Activated naive CD4-positive, alpha-beta T cell treated with anti-CD3 and anti-CD28 coated beads for 36 hours (primary cell): ENCODE measurements at regions of chr1 and their contacts with region 1.

Region 1: DNA sequence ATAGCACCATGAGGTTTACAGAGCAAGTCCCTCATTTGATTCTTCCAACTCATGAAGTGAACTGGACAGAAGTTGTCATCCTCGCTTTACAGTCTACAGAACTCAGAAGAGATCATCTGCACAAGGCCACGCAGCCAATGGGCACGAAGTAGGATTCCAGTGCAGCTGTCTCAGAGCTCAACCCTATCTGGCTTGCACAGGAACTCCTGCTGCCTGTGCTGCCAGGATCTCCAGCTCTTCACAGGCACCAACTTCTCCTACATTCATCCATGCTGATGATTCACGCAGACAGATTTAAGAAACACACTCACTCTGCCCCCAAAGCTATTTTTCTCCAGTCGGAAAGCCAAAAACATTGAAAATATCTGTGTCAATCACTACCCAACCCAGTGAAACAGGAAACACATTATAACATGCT is 157.0 kb downstream of the RERE start:
- DNase-seq: no peak
- H3K4me3 Mint-ChIP-seq: no peak overlapping the region
- H3K27ac Mint-ChIP-seq: no peak overlapping the region
- H3K4me1 Mint-ChIP-seq: peaks cover 9% of the 10 kb centered on the region
- H3K27me3 Mint-ChIP-seq: no peaks in the 10 kb centered on the region

Region 2: DNA sequence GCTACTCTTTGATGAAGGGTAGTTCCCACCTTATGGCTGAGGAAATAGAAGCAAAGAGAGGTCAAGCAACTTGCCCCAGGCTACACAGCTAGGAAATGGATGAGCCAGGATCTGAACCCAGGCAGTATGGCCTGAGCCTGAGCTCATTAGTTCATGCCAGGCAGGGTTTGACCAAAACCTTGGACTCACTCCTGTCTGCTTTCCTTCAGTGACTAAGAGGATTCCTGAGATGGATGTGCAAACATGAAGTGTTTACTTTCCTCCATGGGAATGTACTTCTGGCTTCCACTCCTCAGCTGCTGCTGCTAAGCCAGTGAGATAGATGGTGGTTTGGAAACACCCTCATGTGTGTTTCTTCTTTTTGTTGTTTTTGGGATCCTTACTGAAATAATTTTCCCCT is 599.2 kb before region 1 on chr1:
- CTCF ChIA-PET with region 1: no interaction called
- intact Hi-C with region 1: no loop called
- DNase-seq: no peak
- H3K4me3 Mint-ChIP-seq: no peak overlapping the region
- H3K27ac Mint-ChIP-seq: no peak overlapping the region
- H3K4me1 Mint-ChIP-seq: no peaks in the 10 kb centered on the region
- H3K27me3 Mint-ChIP-seq: no peaks in the 10 kb centered on the region

Region 3: DNA sequence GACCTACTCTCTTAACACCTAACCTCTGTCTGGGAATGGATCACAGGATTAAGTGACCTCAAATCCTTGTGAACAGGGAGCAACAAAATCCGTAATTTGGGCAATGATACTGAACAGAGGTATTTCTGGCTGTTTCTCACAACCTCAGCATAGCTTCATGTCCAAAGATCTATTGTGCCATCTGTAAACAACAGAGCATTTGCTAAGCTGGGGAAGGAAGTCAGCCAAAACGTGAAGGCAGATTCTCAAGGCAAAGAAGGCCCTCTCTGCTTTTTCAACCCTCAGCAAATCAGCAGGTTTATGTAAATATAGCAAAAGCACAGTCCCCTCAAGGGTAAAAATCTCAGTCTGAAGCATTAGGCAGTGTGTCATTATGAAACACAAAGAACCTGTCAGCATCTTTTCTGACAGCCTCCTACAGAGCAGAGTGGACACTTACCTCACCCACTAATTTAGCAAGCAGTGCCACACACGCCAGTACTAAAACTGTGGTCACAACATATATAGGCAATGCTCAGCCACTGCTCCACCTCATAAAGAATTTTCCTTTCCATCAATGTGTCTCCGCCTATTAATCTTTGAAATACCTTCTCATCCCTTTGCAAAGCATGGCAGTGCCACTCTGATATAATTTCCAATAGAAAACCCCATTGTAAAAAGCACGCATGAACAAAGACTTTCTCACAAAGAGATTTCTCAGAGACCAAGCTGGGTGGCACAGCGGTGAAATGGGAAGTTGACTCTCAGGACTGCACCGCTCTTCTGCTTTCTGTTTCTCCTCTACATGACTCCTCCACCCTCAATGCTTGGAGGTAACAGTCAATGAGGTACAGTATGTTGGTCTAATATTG is 31.0 kb before region 1 on chr1:
- CTCF ChIA-PET with region 1: no interaction called
- intact Hi-C with region 1: loop called (anchors 5 kb)
- DNase-seq: peak; percentile 37
- H3K4me3 Mint-ChIP-seq: no peak overlapping the region
- H3K27ac Mint-ChIP-seq: no peak overlapping the region
- H3K4me1 Mint-ChIP-seq: peaks cover 58% of the 10 kb centered on the region
- H3K27me3 Mint-ChIP-seq: no peaks in the 10 kb centered on the region

Region 4: GRCh38 chr1:8649027-8649426 is 11.4 kb before region 1 on chr1:
- CTCF ChIA-PET with region 1: no interaction called
- intact Hi-C with region 1: loop called (anchors 1 kb)
- DNase-seq: peak; percentile 13
- H3K4me3 Mint-ChIP-seq: no peak overlapping the region
- H3K27ac Mint-ChIP-seq: no peak overlapping the region
- H3K4me1 Mint-ChIP-seq: peaks cover 49% of the 10 kb centered on the region
- H3K27me3 Mint-ChIP-seq: no peaks in the 10 kb centered on the region

Region 5: DNA sequence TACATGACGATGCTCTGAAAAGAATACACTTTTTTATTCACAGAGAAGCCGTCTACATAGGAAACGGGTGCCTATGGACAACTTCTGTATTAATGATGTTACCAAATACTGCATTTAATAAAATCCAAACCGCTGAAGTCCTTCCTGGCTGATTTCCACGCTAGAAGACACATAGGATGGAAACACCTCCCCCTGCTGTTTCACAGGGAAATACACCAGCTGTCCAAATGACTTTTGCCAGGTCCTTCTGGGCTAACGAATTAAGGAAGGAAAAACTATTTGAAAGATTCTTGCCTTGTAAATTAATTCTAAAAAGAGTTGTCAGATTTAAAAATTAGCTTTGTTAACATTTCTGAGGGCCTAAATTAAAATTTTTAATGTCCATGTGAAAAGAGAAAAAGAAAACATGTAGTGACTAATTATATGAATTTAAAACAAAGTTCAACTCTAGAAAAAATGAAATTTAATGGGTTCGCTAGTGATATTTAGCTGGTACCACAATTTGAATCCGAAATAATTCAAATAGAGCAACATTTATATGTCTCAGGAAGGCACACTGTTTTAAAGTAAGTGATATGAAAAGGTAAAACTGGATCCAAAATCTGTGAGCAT is 11.0 kb after region 1 on chr1:
- CTCF ChIA-PET with region 1: interaction called, 4 read pairs
- intact Hi-C with region 1: loop called (anchors 1 kb)
- DNase-seq: peak; percentile 43
- H3K4me3 Mint-ChIP-seq: no peak overlapping the region
- H3K27ac Mint-ChIP-seq: no peak overlapping the region
- H3K4me1 Mint-ChIP-seq: peaks cover 52% of the 10 kb centered on the region
- H3K27me3 Mint-ChIP-seq: no peaks in the 10 kb centered on the region

Region 6: DNA sequence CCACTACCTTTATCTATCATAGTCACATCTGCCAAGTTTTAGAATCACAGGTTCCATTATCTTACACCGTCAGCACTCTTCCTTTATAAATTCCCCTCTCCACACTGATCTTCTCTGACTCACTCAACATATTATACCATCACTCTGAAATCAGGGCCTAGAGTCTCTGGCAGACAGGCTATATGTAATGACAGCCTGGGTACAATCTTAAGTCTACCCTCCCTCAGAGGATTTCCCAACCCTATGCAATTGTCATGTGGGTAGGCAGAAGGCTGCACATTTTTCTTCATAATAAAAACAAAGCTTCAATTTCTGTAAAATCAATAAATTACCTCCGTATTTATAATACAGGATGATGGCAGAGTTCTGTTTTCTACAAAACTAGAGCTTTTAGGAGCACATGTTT is 19.0 kb after region 1 on chr1:
- CTCF ChIA-PET with region 1: no interaction called
- intact Hi-C with region 1: loop called (anchors 1 kb)
- DNase-seq: no peak
- H3K4me3 Mint-ChIP-seq: no peak overlapping the region
- H3K27ac Mint-ChIP-seq: no peak overlapping the region
- H3K4me1 Mint-ChIP-seq: peaks cover 28% of the 10 kb centered on the region
- H3K27me3 Mint-ChIP-seq: no peaks in the 10 kb centered on the region